Activated naive CD4-positive, alpha-beta T cell treated with anti-CD3 and anti-CD28 coated beads for 36 hours (primary cell): ENCODE measurements at regions of chr11 and their contacts with region 1.

Region 1: DNA sequence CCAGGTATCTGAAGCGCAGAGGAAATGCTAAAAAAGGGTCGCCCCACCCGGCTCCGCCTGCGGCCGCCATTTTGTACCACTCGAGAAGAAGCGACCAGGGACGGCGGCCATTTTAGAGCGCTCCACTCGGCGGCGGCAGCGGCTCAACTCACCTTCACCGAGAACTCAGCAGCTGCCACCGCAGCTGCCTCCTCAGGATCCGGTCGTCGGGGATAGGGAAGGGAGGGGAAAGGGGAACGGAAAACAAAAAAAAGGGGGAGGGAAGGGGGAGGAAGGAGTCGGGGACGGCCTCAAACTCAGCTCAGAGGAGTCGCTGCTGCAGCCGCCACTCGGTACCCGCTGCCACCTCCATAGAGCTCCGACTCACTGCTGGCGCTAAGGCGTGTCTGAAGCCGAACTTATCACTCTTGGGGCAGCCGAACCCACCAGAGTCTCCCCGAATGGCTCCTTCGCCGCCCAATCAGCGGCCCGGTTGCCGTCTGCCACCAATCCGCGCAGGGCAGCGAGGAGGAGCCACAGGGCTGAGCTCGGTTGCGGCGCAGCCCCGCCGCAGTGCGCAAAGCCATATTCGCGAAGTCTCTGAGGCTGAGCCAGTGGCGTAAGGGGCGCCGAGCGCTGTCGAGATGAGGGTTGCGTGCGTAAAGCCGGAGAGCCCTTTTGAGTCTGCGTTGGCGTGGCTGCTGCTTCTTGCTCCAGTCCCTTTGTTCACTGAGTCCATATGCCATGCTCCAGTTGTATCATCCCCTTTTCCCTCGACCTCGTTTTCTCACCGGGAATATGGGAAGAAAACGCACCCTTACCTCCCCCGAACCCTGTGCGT is at the start of gene EIF4G2:
- DNase-seq: peak; percentile 98
- H3K4me3 Mint-ChIP-seq: peak within 1 kb of the TSS; percentile 95
- H3K27ac Mint-ChIP-seq: peak within 1 kb of the TSS; percentile 97
- H3K4me1 Mint-ChIP-seq: peaks cover 43% of the 10 kb centered on the region
- H3K27me3 Mint-ChIP-seq: no peaks in the 10 kb centered on the region
- total RNA-seq, gene EIF4G2: 640 to 734 TPM

Region 2: DNA sequence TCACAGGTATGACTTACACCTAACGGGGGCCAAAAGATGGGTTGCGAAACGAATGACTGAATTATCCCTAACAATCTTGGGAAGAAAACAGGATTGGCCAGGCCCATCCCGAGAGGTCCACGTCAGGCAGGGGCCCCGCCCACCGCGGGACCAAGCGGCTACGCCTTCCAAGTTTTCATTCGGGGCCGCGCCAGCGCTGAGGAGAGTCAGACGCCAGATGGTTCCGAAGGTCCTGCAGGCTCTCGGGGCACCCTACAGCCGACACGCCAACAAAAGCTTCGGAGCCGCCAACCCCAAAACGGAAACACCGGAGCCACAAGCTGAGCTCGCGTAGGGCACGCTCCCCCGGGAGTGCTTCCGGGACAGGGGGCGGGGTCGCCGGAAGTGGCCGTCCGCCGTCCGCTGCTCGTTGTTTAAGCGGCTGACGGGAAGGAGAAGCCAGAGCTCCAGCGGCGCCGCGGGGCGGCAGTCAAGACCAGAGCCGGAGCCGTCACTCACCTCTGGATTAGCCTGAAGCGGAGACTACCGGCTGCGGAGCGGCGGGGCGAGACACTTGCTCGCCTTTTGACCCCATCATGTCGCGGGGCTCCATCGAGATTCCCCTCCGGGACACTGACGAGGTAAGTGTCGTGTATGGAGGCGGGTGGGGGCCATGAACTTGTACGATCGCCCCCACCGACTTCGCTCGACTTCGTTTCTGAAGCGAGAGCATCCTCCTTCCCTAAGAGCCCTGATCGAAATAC is 57.8 kb before region 1 on chr11 and contains the start of gene CTR9:
- CTCF ChIA-PET with region 1: interaction called, 3 read pairs
- intact Hi-C with region 1: loop called (anchors 1 kb)
- DNase-seq: peak; percentile 95
- H3K4me3 Mint-ChIP-seq: peak within 1 kb of the TSS; percentile 93
- H3K27ac Mint-ChIP-seq: peak within 1 kb of the TSS; percentile 87
- H3K4me1 Mint-ChIP-seq: peaks cover 14% of the 10 kb centered on the region
- H3K27me3 Mint-ChIP-seq: no peaks in the 10 kb centered on the region
- total RNA-seq, gene CTR9: 28.7 to 29.7 TPM

Region 3: DNA sequence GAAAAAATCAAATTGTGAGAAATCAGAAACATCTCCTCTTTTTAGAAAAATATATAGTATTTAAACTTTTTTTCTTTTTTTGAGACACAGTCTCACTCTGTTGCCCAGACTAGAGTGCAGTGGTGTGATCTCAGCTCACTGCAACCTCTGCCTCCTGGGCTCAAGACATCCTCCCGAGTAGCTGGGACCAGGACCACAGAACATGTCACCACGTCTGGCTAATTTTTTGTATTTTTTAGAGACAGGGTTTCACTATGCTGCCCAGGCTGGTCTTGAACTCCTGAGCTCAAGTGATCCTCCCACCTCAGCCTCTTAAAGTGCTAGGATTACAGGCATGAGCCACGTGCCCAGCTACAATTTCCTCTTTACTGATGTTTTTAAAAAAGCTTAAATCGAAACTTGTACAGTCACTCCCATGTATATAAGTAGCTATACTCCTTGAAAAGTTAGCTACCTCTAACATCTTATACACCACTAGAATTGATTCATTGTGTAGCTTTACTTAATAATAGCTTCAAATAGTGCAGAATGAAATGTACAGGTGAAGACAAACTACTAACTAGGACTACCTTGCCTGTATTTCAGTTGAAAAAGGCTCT is 10.3 kb before region 1 on chr11:
- CTCF ChIA-PET with region 1: interaction called, 32 read pairs
- intact Hi-C with region 1: loop called (anchors 1 kb)
- DNase-seq: no peak
- H3K4me3 Mint-ChIP-seq: no peak overlapping the region
- H3K27ac Mint-ChIP-seq: peak overlapping the region; percentile 39
- H3K4me1 Mint-ChIP-seq: peaks cover 51% of the 10 kb centered on the region
- H3K27me3 Mint-ChIP-seq: no peaks in the 10 kb centered on the region

Region 4: DNA sequence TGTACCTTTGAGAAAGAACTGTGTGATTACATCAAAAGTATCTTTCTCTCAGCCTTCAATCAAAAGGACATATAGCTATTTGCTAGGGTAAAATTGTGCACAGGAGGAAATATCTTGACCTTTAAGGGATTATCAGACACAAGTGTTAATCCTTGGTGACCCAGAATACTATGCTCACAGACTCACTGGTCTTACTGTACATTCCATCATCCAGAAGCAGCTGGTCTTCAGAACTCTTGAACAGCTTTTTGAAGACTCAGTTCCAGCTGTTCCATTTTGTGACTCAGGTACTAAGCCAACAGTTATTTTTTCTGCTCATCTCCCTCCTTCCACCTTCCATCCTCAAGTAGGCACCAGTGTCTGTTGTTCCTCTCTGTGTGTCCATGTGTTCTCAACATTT is 29.3 kb after region 1 on chr11:
- CTCF ChIA-PET with region 1: no interaction called
- intact Hi-C with region 1: no loop called
- DNase-seq: no peak
- H3K4me3 Mint-ChIP-seq: no peak overlapping the region
- H3K27ac Mint-ChIP-seq: no peak overlapping the region
- H3K4me1 Mint-ChIP-seq: peaks cover 2% of the 10 kb centered on the region
- H3K27me3 Mint-ChIP-seq: no peaks in the 10 kb centered on the region

Region 5: GRCh38 chr11:11621573-11622319 is 813.0 kb after region 1 on chr11 and contains the start of gene GALNT18:
- CTCF ChIA-PET with region 1: no interaction called
- intact Hi-C with region 1: loop called (anchors 5 kb)
- DNase-seq: peak; percentile 88
- H3K4me3 Mint-ChIP-seq: peak within 1 kb of the TSS; percentile 74
- H3K27ac Mint-ChIP-seq: no peak within 1 kb of the TSS
- H3K4me1 Mint-ChIP-seq: no peaks in the 10 kb centered on the region
- H3K27me3 Mint-ChIP-seq: peaks cover 48% of the 10 kb centered on the region
- total RNA-seq, gene GALNT18: 4.3 to 4.7 TPM

Region 6: GRCh38 chr11:11987503-11988022 is 1178.8 kb after region 1 on chr11:
- CTCF ChIA-PET with region 1: no interaction called
- intact Hi-C with region 1: no loop called
- DNase-seq: no peak
- H3K4me3 Mint-ChIP-seq: no peak overlapping the region
- H3K27ac Mint-ChIP-seq: no peak overlapping the region
- H3K4me1 Mint-ChIP-seq: peaks cover 2% of the 10 kb centered on the region
- H3K27me3 Mint-ChIP-seq: no peaks in the 10 kb centered on the region